PC-9 (cell line): ENCODE measurements at regions of chr2 and their contacts with region 1.

Region 1: DNA sequence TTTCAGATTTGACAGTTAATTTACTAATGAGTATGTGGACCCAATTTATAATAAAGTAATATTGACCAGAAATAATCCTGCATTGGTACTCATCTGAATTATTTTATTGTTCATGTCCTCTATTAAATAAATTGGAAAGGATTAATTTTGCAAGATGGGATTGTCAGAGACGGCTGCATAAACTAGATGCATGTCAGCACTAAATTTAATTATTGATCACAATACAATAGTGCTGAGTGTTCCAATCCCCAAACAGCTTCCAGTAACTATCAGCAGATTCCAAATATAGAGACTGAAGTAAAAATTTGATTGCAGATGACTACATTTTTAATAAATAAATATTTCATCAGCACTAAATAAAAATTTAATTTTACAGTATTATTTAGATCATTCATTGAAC is 387.2 kb downstream of the GRB14 start:
- DNase-seq: no peak
- H3K4me3 ChIP-seq: no peak overlapping the region
- H3K27ac ChIP-seq: no peak overlapping the region
- H3K4me1 ChIP-seq: no peaks in the 10 kb centered on the region
- H3K27me3 ChIP-seq: no peaks in the 10 kb centered on the region
- CTCF ChIP-seq: no peak

Region 2: DNA sequence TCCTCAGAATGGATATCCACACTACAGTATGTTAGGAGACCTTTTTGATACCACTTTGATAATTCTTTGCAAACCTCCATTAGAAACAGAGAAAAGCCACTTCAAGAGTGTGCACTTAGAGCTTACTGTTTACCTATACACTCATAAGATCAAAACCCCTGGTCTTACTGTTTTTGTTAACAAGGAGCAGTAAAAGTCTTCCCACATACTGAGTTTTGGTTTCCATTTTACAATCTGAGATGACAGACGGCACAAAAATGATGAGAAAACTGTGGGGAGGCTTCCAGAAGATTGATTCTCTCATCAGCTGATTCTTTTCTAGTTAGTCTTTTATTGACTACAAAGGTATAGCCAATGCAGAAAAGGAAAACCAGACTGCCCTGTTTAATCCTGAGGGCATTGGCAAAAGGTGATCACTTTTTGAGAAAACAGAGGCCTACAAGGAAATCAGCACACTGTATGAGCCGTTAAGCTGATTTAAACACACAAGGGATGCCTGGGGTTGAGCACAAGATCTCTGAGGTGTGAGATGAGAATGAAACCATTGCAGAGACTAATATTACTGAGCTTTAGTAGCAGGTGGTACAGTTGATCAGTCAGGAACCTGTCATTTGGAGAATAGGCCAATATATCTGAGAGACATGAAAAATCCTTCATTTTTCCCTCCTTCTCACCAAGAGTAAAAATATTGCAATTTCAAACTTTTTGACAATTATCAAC is 18.7 kb after region 1 on chr2:
- CTCF ChIA-PET with region 1: no interaction called
- POLR2A ChIA-PET with region 1: interaction called, 28 read pairs
- intact Hi-C with region 1: no loop called
- DNase-seq: no peak
- H3K4me3 ChIP-seq: no peak overlapping the region
- H3K27ac ChIP-seq: no peak overlapping the region
- H3K4me1 ChIP-seq: no peaks in the 10 kb centered on the region
- H3K27me3 ChIP-seq: no peaks in the 10 kb centered on the region
- CTCF ChIP-seq: no peak